Activated CD4-positive, alpha-beta memory T cell treated with anti-CD3 and anti-CD28 coated beads, Interleukin-2, amount 10 ng/mL, durations not matched to agents 7 days and 5 days (primary cell): ENCODE measurements at regions of chr9 and their contacts with region 1.

Region 1: DNA sequence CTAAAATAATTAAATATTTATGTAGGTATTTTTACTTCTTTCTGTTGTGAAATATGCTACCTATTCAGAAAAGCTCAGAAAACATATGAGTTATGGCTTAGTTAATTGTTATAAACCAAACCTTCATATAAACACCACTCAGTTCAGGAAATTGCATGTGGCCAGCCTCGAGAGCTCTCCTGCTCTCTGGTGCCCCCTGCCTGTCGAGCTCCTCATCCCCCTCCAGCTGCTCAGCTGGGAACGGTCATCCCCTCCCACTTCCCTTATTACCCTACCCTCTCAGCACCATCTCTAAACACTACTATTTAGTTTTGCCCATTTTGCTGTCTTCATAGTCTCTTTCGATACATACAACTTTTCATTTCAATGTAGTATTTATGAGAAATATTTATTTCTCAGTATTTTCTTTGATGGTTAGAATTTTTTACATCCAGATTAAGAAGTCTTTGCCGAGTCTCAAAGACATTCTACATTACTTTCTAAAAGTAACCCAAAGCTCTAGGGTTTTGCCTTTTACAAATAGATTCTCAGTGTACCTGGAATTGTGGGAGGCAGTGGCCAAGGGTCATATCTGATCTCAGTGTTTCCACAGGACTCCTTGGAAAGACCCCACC is 51.2 kb upstream of the SEMA4D start:
- DNase-seq: peak; percentile 85
- H3K4me3 Mint-ChIP-seq: no peak overlapping the region
- H3K27ac Mint-ChIP-seq: no peak overlapping the region
- H3K4me1 Mint-ChIP-seq: peaks cover 21% of the 10 kb centered on the region
- H3K27me3 Mint-ChIP-seq: peaks cover 24% of the 10 kb centered on the region

Region 2: GRCh38 chr9:89318123-89319014 is 230.8 kb before region 1 on chr9 and contains the start of gene SECISBP2:
- CTCF ChIA-PET with region 1: interaction called, 26 read pairs
- POLR2A ChIA-PET with region 1: interaction called, 10 read pairs
- DNase-seq: peak; percentile 94
- H3K4me3 Mint-ChIP-seq: peak within 1 kb of the TSS; percentile 79
- H3K27ac Mint-ChIP-seq: peak within 1 kb of the TSS; percentile 90
- H3K4me1 Mint-ChIP-seq: peaks cover 86% of the 10 kb centered on the region
- H3K27me3 Mint-ChIP-seq: no peaks in the 10 kb centered on the region
- total RNA-seq, gene SECISBP2: 35.2 to 35.7 TPM

Region 3: GRCh38 chr9:89418882-89419640 is 130.1 kb before region 1 on chr9:
- CTCF ChIA-PET with region 1: interaction called, 25 read pairs
- POLR2A ChIA-PET with region 1: interaction called, 3 read pairs
- DNase-seq: peak; percentile 87
- H3K4me3 Mint-ChIP-seq: peak overlapping the region; percentile 78
- H3K27ac Mint-ChIP-seq: peak overlapping the region; percentile 97
- H3K4me1 Mint-ChIP-seq: peaks cover 99% of the 10 kb centered on the region
- H3K27me3 Mint-ChIP-seq: no peaks in the 10 kb centered on the region

Region 4: DNA sequence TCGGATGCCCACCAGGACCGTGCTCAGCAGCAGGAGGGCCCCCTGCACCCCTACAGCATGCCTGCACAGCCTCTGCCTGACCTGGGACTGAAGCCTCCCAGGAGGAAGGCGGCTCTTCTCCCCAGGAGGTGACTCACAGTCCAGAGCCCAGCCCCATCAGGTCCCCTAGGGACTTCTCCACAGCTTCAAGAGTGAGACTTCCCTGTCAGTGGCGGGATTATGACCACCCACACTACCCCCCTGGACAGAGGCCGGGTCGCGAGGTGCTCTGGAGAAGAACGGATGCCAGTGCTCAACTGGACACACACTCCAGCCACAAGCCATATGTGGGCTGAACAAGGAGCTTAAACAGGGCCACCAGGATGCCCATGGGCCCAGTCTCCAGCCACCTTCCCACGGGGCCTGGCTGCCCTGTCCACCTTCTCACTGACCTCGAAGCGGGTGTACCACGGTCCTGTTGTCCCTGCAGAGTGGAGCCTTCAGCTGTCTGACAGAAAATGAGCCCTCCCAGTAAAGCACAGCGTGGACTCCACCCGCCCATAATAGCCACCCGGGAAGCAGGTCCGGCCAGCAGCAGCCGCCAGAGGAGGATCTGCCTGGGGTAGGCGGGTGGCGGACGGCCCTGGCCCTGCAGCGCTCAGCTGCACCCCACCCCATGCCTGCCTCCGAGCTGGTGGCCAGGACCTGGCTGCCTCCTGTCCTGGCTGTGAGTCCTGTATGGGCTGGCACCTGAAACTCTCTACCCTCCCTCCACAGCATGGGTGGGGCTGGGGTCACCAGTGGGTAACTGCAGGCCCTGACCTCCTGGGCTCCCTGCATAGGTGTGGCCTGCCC is 105.9 kb before region 1 on chr9:
- CTCF ChIA-PET with region 1: interaction called, 27 read pairs
- POLR2A ChIA-PET with region 1: interaction called, 8 read pairs
- DNase-seq: no peak
- H3K4me3 Mint-ChIP-seq: no peak overlapping the region
- H3K27ac Mint-ChIP-seq: no peak overlapping the region
- H3K4me1 Mint-ChIP-seq: peaks cover 88% of the 10 kb centered on the region
- H3K27me3 Mint-ChIP-seq: no peaks in the 10 kb centered on the region

Region 5: DNA sequence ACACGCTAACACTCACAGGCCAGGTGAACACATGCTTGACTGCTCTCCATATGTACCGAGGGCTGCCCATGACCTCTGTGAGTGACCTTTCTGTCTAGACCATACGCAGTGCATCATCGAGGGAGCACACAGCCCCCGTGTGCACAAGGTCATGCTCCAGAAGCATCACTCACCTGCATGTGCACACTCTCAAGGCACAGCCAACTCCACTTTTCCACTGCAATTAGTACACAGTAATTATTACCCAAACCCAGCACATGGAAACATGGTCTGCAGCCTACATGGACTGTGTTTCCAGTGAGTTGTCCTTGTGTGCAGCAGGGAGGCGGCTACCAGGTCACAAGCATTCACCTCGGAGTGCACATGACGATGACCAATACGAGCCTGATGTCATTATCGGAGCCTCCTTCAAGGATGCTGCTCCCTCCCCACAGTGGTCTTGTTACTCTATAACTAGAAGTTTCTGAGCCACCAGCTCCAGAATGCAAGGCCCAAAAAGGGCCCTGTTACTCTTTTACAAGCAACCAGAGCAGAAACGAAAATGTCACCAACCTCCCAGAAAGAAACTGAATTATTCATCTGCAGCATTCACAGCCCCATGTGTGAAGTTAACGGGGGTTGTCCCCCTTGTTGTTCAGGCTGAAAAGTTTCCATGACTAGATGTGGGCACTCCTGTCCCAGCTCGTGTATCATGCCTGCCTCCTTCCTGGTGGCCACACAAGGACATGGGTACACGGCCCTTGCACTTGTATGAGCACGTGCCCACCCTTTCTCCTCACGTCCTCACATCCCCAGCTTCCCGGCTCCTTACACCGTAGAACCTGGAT is 82.5 kb before region 1 on chr9:
- CTCF ChIA-PET with region 1: interaction called, 27 read pairs
- POLR2A ChIA-PET with region 1: interaction called, 13 read pairs
- DNase-seq: no peak
- H3K4me3 Mint-ChIP-seq: peak overlapping the region; percentile 40
- H3K27ac Mint-ChIP-seq: peak overlapping the region; percentile 80
- H3K4me1 Mint-ChIP-seq: peaks cover 96% of the 10 kb centered on the region
- H3K27me3 Mint-ChIP-seq: no peaks in the 10 kb centered on the region

Region 6: DNA sequence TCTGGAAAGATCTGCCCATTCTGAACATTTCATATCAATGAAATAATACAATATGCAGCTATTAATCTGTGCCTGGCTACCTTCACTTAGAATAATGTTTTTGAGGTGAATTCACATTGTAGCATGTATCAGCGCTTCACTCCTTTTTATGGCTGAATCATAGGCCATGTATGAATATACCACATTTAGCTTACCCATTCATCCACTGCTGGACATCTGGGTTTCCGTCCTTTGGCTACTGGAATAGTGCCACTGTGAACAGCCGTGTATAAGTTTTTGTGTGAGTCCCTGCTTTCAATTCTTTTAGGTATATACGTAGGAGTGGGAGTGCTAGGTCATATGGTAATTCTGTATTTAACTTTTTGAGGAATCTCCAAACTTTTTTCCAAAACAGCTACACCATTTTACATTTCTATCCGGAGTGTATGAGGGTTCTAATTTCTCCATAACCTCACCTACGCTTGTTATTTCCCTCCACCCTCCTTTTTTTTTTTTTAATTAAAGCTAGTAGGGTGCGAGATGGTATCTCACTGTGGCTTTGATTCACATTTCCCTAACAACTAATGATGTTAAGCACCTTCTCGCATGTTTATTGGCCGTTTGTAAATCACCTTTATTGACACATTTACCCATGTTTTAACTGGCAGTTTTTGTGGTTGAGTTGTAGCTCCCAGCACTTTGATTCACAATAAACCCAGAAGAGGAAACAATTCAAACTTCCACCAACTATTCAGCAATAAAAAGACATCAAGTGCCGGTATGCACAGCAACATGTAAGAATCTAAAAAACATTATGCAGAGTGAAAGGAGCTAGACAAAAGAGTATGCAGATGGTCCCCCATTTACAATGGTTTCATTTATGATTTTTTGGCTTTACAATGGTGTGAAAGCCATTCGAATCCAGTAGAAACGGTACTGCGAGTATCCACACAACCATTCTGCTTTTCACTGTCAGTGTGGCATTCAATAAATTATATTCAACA is 59.3 kb before region 1 on chr9:
- CTCF ChIA-PET with region 1: interaction called, 60 read pairs
- POLR2A ChIA-PET with region 1: interaction called, 8 read pairs
- DNase-seq: no peak
- H3K4me3 Mint-ChIP-seq: peak overlapping the region; percentile 61
- H3K27ac Mint-ChIP-seq: peak overlapping the region; percentile 87
- H3K4me1 Mint-ChIP-seq: peaks cover 95% of the 10 kb centered on the region
- H3K27me3 Mint-ChIP-seq: no peaks in the 10 kb centered on the region

Region 7: GRCh38 chr9:89522261-89522958 is 26.7 kb before region 1 on chr9:
- CTCF ChIA-PET with region 1: interaction called, 43 read pairs
- POLR2A ChIA-PET with region 1: interaction called, 23 read pairs
- DNase-seq: peak; percentile 88
- H3K4me3 Mint-ChIP-seq: peak overlapping the region; percentile 61
- H3K27ac Mint-ChIP-seq: peak overlapping the region; percentile 100
- H3K4me1 Mint-ChIP-seq: peaks cover 92% of the 10 kb centered on the region
- H3K27me3 Mint-ChIP-seq: no peaks in the 10 kb centered on the region

Region 8: DNA sequence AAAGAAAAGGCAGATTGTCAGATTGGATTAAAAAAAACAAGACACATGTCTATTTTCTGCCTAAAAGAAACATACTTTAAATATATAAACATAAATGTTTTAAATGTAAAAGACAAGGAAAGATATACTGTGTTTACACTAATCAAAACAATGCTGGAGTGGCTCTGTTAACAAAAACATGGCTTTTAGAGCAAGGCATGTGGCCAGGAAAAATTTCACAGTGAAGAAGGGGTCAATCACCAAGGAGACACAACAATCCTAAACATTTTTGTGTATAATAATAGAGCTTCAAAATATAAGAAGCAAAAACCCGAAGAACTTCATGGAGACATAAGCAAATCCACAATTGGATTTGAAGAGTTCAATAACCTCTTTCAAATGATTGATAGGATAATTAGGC is 37.2 kb after region 1 on chr9:
- CTCF ChIA-PET with region 1: no interaction called
- POLR2A ChIA-PET with region 1: no interaction called
- DNase-seq: no peak
- H3K4me3 Mint-ChIP-seq: no peak overlapping the region
- H3K27ac Mint-ChIP-seq: no peak overlapping the region
- H3K4me1 Mint-ChIP-seq: no peaks in the 10 kb centered on the region
- H3K27me3 Mint-ChIP-seq: peaks cover 59% of the 10 kb centered on the region

Region 9: DNA sequence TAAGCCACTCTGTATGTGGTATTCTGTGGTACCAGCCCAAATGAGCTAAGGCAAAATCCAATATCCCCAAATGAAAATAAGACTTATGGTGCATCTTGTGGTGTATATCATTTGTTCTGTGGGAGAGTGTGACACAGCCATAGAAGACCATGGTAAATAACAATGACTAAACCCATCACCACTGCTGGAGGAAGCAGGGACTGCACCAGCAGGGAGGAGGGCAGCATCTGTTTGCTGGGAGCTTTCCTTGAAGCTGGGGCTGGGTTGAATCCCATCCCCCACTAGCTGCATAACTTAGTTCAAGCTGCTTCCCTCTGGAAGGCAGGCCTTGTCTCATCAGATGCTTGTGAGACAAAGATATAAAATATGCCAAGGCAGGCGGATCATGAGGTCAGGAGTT is 69.9 kb after region 1 on chr9:
- CTCF ChIA-PET with region 1: no interaction called
- POLR2A ChIA-PET with region 1: no interaction called
- DNase-seq: no peak
- H3K4me3 Mint-ChIP-seq: no peak overlapping the region
- H3K27ac Mint-ChIP-seq: no peak overlapping the region
- H3K4me1 Mint-ChIP-seq: peaks cover 12% of the 10 kb centered on the region
- H3K27me3 Mint-ChIP-seq: peaks cover 4% of the 10 kb centered on the region

Region 10: GRCh38 chr9:89690334-89690912 is 141.3 kb after region 1 on chr9:
- CTCF ChIA-PET with region 1: no interaction called
- POLR2A ChIA-PET with region 1: no interaction called
- DNase-seq: no peak
- H3K4me3 Mint-ChIP-seq: no peak overlapping the region
- H3K27ac Mint-ChIP-seq: peak overlapping the region; percentile 58
- H3K4me1 Mint-ChIP-seq: peaks cover 45% of the 10 kb centered on the region
- H3K27me3 Mint-ChIP-seq: no peaks in the 10 kb centered on the region